ENCODE measurements at regions of chr5 and their contacts with region 1.

Region 1: GRCh38 chr5:134917070-134917815 is 12.3 kb downstream of the PCBD2 start:
- DNase-seq: peak; percentile 56
- ATAC-seq: peak; percentile 91
- H3K4me3 Mint-ChIP-seq: no peak overlapping the region
- H3K27ac Mint-ChIP-seq: no peak overlapping the region
- H3K4me1 Mint-ChIP-seq: no peaks in the 10 kb centered on the region
- H3K27me3 Mint-ChIP-seq: no peaks in the 10 kb centered on the region
- CTCF ChIP-seq: peak; percentile 36; the same call in 1 of the 2 replicates

Region 2: GRCh38 chr5:134784241-134784920 is 132.9 kb before region 1 on chr5:
- CTCF ChIA-PET with region 1: no interaction called
- POLR2A ChIA-PET with region 1: no interaction called
- DNase-seq: no peak
- ATAC-seq: no peak
- H3K4me3 Mint-ChIP-seq: no peak overlapping the region
- H3K27ac Mint-ChIP-seq: peak overlapping the region; percentile 85
- H3K4me1 Mint-ChIP-seq: peaks cover 15% of the 10 kb centered on the region
- H3K27me3 Mint-ChIP-seq: no peaks in the 10 kb centered on the region
- CTCF ChIP-seq: no peak

Region 3: GRCh38 chr5:135024956-135025729 is 107.9 kb after region 1 on chr5:
- CTCF ChIA-PET with region 1: interaction called, 11 read pairs
- POLR2A ChIA-PET with region 1: no interaction called
- DNase-seq: no peak
- ATAC-seq: no peak
- H3K4me3 Mint-ChIP-seq: no peak overlapping the region
- H3K27ac Mint-ChIP-seq: no peak overlapping the region
- H3K4me1 Mint-ChIP-seq: peaks cover 25% of the 10 kb centered on the region
- H3K27me3 Mint-ChIP-seq: peaks cover 77% of the 10 kb centered on the region
- CTCF ChIP-seq: no peak

Region 4: GRCh38 chr5:135191084-135191826 is 274.0 kb after region 1 on chr5:
- CTCF ChIA-PET with region 1: interaction called, 15 read pairs
- POLR2A ChIA-PET with region 1: no interaction called
- DNase-seq: peak; percentile 91
- ATAC-seq: peak; percentile 93
- H3K4me3 Mint-ChIP-seq: peak overlapping the region; percentile 59
- H3K27ac Mint-ChIP-seq: no peak overlapping the region
- H3K4me1 Mint-ChIP-seq: peaks cover 13% of the 10 kb centered on the region
- H3K27me3 Mint-ChIP-seq: peaks cover 53% of the 10 kb centered on the region
- CTCF ChIP-seq: peak; percentile 87

Region 5: DNA sequence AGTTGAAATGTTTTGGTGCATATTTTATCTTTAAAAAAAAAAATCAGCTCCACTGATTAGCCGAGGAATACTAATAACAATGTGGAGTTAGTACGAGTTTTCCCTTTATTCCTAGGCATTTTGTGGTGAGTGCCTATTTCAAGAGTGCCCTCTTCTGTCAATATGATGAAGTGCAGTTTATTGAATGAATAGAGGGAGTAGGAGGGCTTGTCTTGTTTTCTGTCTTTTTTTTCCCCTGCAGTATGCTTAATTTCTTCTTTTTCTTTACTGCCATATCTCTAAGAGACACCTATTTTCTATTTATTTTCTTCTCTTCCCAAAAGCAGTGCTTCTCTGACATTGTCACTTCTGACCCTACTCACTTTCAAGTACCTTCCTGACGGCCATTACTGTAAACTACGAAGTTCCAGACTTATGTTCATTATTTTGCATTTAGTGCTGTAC is 286.4 kb after region 1 on chr5:
- CTCF ChIA-PET with region 1: interaction called, 10 read pairs
- POLR2A ChIA-PET with region 1: no interaction called
- DNase-seq: no peak
- ATAC-seq: no peak
- H3K4me3 Mint-ChIP-seq: no peak overlapping the region
- H3K27ac Mint-ChIP-seq: no peak overlapping the region
- H3K4me1 Mint-ChIP-seq: peaks cover 13% of the 10 kb centered on the region
- H3K27me3 Mint-ChIP-seq: 0 out of 2 replicates have a peak, but pooled peaks cover 3% of the 10 kb centered on the region
- CTCF ChIP-seq: peak; percentile 15; the same call in 1 of the 2 replicates